Activated naive CD4-positive, alpha-beta T cell treated with anti-CD3 and anti-CD28 coated beads, Interleukin-2, amount 10 ng/mL, durations not matched to agents 7 days and 5 days (primary cell): ENCODE measurements at regions of chr6 and their contacts with region 1.

Region 1: DNA sequence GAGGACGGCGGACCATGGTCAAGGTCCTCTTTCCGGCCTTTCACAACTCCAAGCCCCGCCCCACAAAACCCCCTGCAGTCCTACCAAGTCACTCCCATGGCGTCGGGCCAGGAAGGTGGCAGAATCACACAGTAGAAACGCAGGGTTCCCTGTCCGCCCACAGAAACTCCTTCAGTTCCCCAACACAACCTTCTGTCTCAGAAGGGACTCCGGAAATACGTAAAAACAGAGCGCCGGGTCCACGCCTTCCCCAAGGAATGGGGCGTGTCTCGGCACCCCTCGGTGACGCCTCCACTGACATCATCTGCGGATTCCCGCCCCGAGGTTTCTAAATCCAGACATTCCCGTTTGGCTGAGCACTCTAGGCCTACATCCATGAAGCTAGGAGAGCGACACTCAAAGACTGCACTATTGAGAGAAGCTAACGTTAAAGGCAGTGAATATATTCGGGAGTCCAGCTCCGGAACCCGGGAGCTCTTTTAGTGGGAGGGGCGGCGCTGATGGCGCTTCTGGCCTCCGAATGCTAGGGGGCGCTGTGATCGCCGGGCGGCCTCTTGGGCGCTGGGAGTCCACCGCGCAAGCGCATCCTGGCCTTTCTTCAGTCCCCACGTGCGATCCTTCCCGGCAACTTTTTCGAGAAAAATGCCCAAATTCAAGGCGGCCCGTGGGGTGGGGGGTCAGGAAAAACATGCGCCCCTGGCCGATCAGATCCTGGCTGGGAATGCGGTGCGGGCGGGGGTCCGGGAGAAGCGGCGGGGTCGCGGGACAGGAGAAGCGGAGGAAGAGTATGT is at the starts of genes BYSL and MED20:
- DNase-seq: peak; percentile 95
- H3K4me3 Mint-ChIP-seq: peak within 1 kb of the TSS; percentile 100
- H3K27ac Mint-ChIP-seq: peak within 1 kb of the TSS; percentile 99
- H3K4me1 Mint-ChIP-seq: peaks cover 61% of the 10 kb centered on the region
- H3K27me3 Mint-ChIP-seq: no peaks in the 10 kb centered on the region

Region 2: DNA sequence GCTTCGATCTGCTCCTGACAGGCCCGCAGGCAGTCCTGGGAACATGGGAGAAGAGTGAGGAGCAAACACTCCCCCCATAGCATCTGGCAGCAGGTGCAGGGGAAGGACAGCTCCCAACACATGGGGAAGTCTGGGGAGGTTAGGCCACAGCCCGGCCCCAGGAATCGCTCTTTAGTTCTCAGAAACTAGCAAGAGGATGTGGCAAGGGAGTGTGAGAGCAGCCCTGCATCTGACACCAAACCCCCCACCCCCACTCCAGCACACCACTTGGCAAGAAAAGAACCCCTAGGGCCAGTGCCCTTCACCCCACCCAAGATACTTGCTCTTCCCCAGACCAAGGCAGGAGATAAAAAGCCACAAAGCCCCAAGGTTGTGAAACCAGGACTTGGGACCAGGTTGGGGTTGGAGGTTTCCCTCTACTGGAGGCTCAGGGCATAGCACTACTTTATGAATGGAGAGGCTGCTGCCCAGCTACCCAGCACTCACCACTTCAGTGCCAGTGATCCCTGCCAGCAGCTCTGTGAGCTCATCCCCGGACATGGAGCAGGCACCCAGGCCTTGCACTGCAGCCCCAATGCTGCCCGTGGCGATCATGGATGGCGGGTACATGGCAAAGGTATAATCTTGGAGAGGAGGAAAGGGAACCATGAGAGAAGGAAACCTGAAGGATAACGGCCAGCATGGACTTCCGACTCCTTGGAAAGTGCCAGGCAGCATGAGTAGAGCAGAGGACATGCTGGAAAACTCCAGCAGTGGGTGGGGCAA is 15.1 kb after region 1 on chr6:
- CTCF ChIA-PET with region 1: interaction called, 89 read pairs
- DNase-seq: peak; percentile 95
- H3K4me3 Mint-ChIP-seq: peak overlapping the region; percentile 100
- H3K27ac Mint-ChIP-seq: peak overlapping the region; percentile 96
- H3K4me1 Mint-ChIP-seq: peaks cover 69% of the 10 kb centered on the region
- H3K27me3 Mint-ChIP-seq: no peaks in the 10 kb centered on the region

Region 3: GRCh38 chr6:42050266-42051032 is 129.3 kb after region 1 on chr6 and contains the start of gene TAF8:
- CTCF ChIA-PET with region 1: interaction called, 76 read pairs
- DNase-seq: peak; percentile 95
- H3K4me3 Mint-ChIP-seq: peak within 1 kb of the TSS; percentile 97
- H3K27ac Mint-ChIP-seq: peak within 1 kb of the TSS; percentile 98
- H3K4me1 Mint-ChIP-seq: peaks cover 77% of the 10 kb centered on the region
- H3K27me3 Mint-ChIP-seq: no peaks in the 10 kb centered on the region